ENCODE measurements at regions of chr17 and their contacts with region 1.

Region 1: GRCh38 chr17:56679115-56679766 is 85.7 kb downstream of the NOG start:
- DNase-seq: no peak
- H3K4me3 Mint-ChIP-seq: no peak overlapping the region
- H3K27ac Mint-ChIP-seq: no peak overlapping the region
- H3K4me1 Mint-ChIP-seq: peaks cover 21% of the 10 kb centered on the region
- H3K27me3 Mint-ChIP-seq: peaks cover 42% of the 10 kb centered on the region

Region 2: DNA sequence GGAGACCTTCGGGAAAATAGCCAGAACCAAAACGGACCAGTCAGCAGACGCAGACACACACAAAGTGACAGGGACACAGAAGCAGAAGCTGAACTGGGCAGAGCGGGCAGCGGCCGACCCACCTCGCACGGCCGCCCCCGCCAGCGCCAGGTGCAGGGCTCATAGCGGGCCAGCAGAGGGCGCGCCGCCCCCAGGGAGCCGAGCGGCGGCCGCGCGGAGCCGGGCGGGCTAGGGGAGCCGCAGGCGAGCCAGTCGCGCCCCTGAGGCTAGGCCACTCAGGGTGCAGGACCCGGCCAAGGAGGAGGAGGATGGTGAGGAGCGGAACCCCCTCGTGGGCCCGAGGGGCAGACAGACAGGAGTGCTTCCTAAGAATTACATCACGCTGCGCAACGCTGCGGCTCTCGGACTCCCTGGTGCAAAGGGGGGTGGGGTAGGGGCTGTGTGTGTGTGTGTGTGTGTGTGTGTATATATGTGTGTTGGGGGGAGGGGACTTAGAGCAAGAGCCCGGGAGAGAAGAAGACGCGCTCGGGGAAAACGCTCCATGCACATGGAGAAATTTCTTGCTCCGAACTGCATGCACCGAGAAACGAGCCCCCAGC is 86.7 kb before region 1 on chr17:
- intact Hi-C with region 1: loop called (anchors 1 kb)
- DNase-seq: peak; percentile 39
- H3K4me3 Mint-ChIP-seq: peak overlapping the region; percentile 66
- H3K27ac Mint-ChIP-seq: no peak overlapping the region
- H3K4me1 Mint-ChIP-seq: peaks cover 17% of the 10 kb centered on the region
- H3K27me3 Mint-ChIP-seq: peaks cover 56% of the 10 kb centered on the region

Region 3: GRCh38 chr17:56707312-56708219 is 28.3 kb after region 1 on chr17:
- intact Hi-C with region 1: no loop called
- DNase-seq: no peak
- H3K4me3 Mint-ChIP-seq: no peak overlapping the region
- H3K27ac Mint-ChIP-seq: no peak overlapping the region
- H3K4me1 Mint-ChIP-seq: no peaks in the 10 kb centered on the region
- H3K27me3 Mint-ChIP-seq: peaks cover 23% of the 10 kb centered on the region